ENCODE measurements at regions of chr2 and their contacts with region 1.

Region 1: DNA sequence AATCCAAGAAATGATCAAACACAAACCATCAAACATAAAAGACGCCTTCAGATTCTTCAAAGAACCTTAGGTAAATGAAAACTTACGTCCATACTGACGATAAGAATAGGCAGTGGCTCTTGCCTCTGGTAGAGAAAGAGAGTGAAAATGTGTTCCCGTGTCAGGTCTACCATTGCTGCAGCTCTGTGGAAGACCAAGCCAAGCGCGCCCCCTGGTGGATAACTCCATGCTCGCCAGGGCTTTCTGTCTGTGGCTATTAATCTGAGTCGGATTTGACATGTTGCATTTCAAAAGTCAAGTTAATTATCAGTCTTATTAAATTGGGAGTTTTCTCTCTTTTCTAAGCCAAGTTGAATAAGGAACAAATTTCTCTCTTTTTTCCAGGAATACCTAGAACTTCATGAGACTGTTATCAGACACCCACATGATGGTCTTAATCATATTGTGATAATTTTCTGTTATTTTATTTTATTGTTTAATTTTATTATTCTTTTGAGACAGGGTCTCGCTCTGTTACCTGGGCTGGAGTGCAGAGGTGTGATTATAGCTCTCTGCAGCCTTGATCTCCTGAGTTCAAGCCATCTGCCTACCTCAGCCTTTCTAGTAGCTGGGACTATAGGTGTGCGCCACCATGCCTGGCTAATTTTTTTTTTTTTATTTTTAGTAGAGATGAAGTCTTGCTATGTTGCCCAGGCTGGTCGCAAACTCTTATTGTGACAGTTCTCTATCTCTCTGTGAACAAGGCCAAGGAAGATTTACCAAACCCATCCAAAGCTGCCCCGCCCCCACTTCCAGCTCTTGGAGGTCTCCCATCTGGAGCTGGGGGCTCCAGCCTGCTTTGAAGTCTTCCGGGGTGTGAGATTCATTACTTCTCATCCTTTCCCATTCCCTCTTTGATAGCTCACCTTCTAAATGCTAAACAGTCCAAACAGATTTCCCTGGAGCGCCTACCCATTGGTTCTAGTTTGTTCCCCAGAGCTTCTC is 15.8 kb upstream of the ZAP70 start:
- DNase-seq: peak; percentile 84 to 88 (median 87)
- H3K4me3 ChIP-seq: no peak overlapping the region
- H3K4me3 Mint-ChIP-seq: peak overlapping the region in 3 of 8 donors; percentile 4 to 61 (median 23)
- H3K27ac ChIP-seq: no peak overlapping the region
- H3K27ac Mint-ChIP-seq: peak overlapping the region in 5 of 7 donors; percentile 37 to 88 (median 70)
- H3K4me1 ChIP-seq: no peaks in the 10 kb centered on the region
- H3K4me1 Mint-ChIP-seq: peaks cover 4 to 8% (median 6%) of the 10 kb centered on the region in 4 donors
- H3K27me3 ChIP-seq: no peaks in the 10 kb centered on the region
- H3K27me3 Mint-ChIP-seq: no peaks in the 10 kb centered on the region

Region 2: DNA sequence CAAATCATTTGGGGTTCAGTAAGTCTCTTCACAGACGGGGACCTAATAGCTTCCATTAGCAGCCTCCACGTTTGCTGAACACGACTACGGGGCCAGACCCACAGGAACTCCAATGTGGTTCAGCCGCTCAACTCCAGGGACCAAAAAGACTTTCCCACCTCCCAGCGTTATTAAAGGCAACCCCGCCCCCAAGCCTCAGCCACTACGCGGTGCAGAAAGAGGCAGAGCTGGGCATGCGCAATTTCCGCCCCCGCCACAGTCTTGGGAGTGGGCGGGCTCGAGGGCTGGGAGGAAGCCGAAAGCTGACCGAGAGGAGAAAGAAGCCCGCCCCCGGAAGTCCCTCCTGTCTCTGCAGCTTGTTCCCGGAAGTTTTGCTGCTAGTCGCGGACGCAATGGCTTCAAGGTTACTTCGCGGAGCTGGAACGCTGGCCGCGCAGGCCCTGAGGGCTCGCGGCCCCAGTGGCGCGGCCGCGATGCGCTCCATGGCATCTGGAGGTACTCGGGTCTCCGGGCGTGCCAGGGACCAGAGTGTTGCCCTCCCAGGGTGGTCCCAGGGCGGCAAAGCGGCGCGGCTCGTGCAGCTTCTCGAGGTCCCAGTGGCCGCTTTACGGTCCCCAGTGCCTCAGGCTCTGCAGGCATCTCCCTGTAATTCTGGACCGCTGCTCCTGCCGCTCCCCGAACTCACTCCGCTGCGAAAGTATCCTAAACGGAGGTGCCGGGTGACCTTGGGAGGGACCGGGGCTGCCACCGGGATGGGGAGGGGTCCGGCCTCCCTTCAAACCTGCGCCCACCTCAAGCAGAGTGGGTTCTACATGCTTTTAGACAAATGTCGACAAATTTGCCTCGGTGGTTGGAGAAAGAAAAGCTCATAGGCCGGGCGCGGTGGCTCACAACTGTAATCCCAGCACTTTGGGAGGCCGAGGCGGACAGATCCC is 51.6 kb before region 1 on chr2 and contains the start of gene COX5B:
- CTCF ChIA-PET with region 1: interaction called, 15 read pairs
- POLR2A ChIA-PET with region 1: interaction called, 19 read pairs
- intact Hi-C with region 1: no loop called
- DNase-seq: peak; percentile 97 to 99 (median 98)
- H3K4me3 ChIP-seq: peak within 1 kb of the TSS; percentile 84 to 87
- H3K4me3 Mint-ChIP-seq: peak within 1 kb of the TSS; percentile 91 to 98 (median 96)
- H3K27ac ChIP-seq: peak within 1 kb of the TSS; percentile 88
- H3K27ac Mint-ChIP-seq: peak within 1 kb of the TSS; percentile 92 to 99 (median 98)
- H3K4me1 ChIP-seq: peaks cover 20% of the 10 kb centered on the region
- H3K4me1 Mint-ChIP-seq: peaks cover 18 to 33% (median 27%) of the 10 kb centered on the region in 4 donors
- H3K27me3 ChIP-seq: no peaks in the 10 kb centered on the region
- H3K27me3 Mint-ChIP-seq: no peaks in the 10 kb centered on the region
- total RNA-seq, gene COX5B: 118 to 120 TPM

Region 3: GRCh38 chr2:97710596-97711386 is 13.2 kb after region 1 on chr2:
- CTCF ChIA-PET with region 1: interaction called, 67 read pairs
- POLR2A ChIA-PET with region 1: interaction called, 21 read pairs
- intact Hi-C with region 1: no loop called
- DNase-seq: peak in 1 of 5 donors; percentile 71
- H3K4me3 ChIP-seq: no peak overlapping the region
- H3K4me3 Mint-ChIP-seq: peak overlapping the region in 6 of 8 donors; percentile 3 to 97 (median 16)
- H3K27ac ChIP-seq: peak overlapping the region; percentile 31
- H3K27ac Mint-ChIP-seq: peak overlapping the region; percentile 69 to 95 (median 86)
- H3K4me1 ChIP-seq: peaks cover 57% of the 10 kb centered on the region
- H3K4me1 Mint-ChIP-seq: peaks cover 34 to 60% (median 45%) of the 10 kb centered on the region in 4 donors
- H3K27me3 ChIP-seq: no peaks in the 10 kb centered on the region
- H3K27me3 Mint-ChIP-seq: no peaks in the 10 kb centered on the region

Region 4: GRCh38 chr2:97728091-97728731 is 30.7 kb after region 1 on chr2:
- CTCF ChIA-PET with region 1: interaction called, 11 read pairs
- POLR2A ChIA-PET with region 1: interaction called, 4 read pairs
- intact Hi-C with region 1: no loop called
- DNase-seq: peak in 1 of 5 donors; percentile 57
- H3K4me3 ChIP-seq: no peak overlapping the region
- H3K4me3 Mint-ChIP-seq: peak overlapping the region in 6 of 8 donors; percentile 29 to 57 (median 42)
- H3K27ac ChIP-seq: peak overlapping the region; percentile 21
- H3K27ac Mint-ChIP-seq: peak overlapping the region; percentile 66 to 92 (median 75)
- H3K4me1 ChIP-seq: peaks cover 52% of the 10 kb centered on the region
- H3K4me1 Mint-ChIP-seq: peaks cover 39 to 76% (median 57%) of the 10 kb centered on the region in 4 donors
- H3K27me3 ChIP-seq: no peaks in the 10 kb centered on the region
- H3K27me3 Mint-ChIP-seq: no peaks in the 10 kb centered on the region

Region 5: GRCh38 chr2:97751752-97752151 is 54.2 kb after region 1 on chr2:
- CTCF ChIA-PET with region 1: interaction called, 166 read pairs
- POLR2A ChIA-PET with region 1: interaction called, 4 read pairs
- intact Hi-C with region 1: loop called (anchors 1 kb)
- DNase-seq: no peak
- H3K4me3 ChIP-seq: no peak overlapping the region
- H3K4me3 Mint-ChIP-seq: no peak overlapping the region
- H3K27ac ChIP-seq: no peak overlapping the region
- H3K27ac Mint-ChIP-seq: peak overlapping the region in 4 of 7 donors; percentile 7 to 88 (median 43)
- H3K4me1 ChIP-seq: peaks cover 19% of the 10 kb centered on the region
- H3K4me1 Mint-ChIP-seq: peaks cover 13 to 23% (median 16%) of the 10 kb centered on the region in 4 donors
- H3K27me3 ChIP-seq: no peaks in the 10 kb centered on the region
- H3K27me3 Mint-ChIP-seq: no peaks in the 10 kb centered on the region

Region 6: DNA sequence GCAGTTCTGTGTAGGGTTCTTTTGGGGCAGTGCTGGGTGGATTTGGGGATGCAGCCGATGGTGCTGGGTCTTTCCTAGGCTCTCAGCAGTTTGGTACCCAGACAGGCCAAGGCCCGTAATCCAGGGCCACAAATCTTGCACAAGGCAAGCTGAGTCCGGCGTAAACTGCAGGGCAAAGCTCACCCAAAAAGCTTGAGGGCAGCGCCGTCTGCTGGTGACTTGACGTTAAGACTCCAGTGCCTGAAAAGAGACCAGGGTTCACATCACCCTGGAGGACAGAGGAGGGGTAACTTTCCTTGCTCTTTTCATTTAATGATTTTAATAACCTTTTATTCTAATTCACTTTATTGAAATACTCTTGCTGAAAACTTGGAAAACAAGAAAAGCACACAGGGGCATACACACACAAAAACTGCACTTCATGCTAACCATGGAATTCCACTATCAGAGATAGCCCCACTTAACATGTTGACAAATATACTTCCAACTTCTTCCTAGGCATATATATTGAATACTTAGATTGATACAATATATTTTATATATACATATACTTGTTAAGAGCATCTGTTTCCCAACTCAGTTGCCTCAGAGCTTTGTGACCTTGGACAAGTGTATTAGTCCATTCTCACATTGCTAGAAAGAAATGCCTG is 687.6 kb after region 1 on chr2:
- CTCF ChIA-PET with region 1: interaction called, 15 read pairs
- POLR2A ChIA-PET with region 1: no interaction called
- intact Hi-C with region 1: no loop called
- DNase-seq: peak; percentile 50 to 62 (median 53)
- H3K4me3 ChIP-seq: no peak overlapping the region
- H3K4me3 Mint-ChIP-seq: peak overlapping the region in 1 of 8 donors; percentile 49
- H3K27ac ChIP-seq: no peak overlapping the region
- H3K27ac Mint-ChIP-seq: no peak overlapping the region
- H3K4me1 ChIP-seq: no peaks in the 10 kb centered on the region
- H3K4me1 Mint-ChIP-seq: peaks cover 0 to 3% (median 1%) of the 10 kb centered on the region in 4 donors
- H3K27me3 ChIP-seq: no peaks in the 10 kb centered on the region
- H3K27me3 Mint-ChIP-seq: peaks cover 0 to 10% of the 10 kb centered on the region in 2 donors

Measured in CD4-positive, alpha-beta memory T cell (primary cell).